AG04449 (cell line): ENCODE measurements at regions of chr5 and their contacts with region 1.

Region 1: GRCh38 chr5:172733131-172733973 is 37.6 kb downstream of the DUSP1 start:
- DNase-seq: peak; percentile 98
- H3K4me3 ChIP-seq: peak overlapping the region; percentile 36
- CTCF ChIP-seq: no peak

Region 2: DNA sequence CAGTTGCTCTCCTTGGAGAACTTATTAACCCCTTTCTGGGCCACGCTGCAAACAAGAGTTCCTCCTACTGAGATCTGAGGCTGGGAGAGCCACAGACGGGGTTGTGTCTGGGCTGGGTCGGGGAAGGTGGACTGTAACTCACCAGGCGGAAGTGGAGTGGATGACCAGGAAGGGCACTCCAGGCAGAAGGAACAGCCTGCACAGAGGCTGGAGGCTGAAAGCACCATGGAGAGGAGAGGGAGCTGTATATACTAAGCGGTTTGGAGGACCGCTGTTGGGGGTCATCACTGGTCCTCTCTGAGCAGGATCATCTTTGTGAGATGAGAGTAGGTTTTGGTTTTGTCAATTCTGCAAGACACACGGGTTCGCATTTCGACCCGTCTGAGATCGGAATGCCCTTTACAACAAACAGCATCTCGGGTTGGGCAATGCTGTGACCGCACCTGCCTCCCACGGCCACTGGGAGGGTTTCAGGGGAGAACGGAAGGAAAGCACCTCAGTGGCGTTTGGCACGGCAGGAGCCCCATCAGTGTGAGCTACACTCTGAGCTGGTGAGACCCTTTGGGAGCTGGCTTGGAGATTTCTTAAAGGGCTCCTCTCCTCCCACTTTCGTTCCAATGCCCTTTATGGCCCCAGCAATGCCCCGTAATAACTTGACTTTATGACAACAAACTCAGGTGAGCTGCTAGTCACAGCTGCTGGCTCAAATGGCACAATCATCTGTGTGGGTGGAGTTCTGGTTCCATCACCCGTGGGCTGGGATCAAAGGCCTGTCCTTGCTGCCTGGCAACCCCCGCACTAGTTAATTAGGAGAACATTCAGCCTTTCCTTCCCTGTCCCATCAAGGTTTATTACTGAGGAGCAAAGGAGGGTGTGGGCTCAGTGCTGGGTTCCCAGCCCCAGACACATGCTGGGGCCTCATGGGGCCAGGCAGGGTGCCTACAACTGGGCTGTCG is 111.0 kb before region 1 on chr5:
- CTCF ChIA-PET with region 1: no interaction called
- POLR2A ChIA-PET with region 1: no interaction called
- DNase-seq: no peak
- H3K4me3 ChIP-seq: no peak overlapping the region
- CTCF ChIP-seq: no peak

Region 3: GRCh38 chr5:172721301-172722130 is 11.8 kb before region 1 on chr5:
- CTCF ChIA-PET with region 1: interaction called, 39 read pairs
- POLR2A ChIA-PET with region 1: interaction called, 3 read pairs
- DNase-seq: no peak
- H3K4me3 ChIP-seq: no peak overlapping the region
- CTCF ChIP-seq: no peak

Region 4: GRCh38 chr5:172764849-172765765 is 31.8 kb after region 1 on chr5:
- CTCF ChIA-PET with region 1: interaction called, 5 read pairs
- POLR2A ChIA-PET with region 1: interaction called, 58 read pairs
- DNase-seq: peak; percentile 98
- H3K4me3 ChIP-seq: peak overlapping the region; percentile 54
- CTCF ChIP-seq: no peak

Region 5: DNA sequence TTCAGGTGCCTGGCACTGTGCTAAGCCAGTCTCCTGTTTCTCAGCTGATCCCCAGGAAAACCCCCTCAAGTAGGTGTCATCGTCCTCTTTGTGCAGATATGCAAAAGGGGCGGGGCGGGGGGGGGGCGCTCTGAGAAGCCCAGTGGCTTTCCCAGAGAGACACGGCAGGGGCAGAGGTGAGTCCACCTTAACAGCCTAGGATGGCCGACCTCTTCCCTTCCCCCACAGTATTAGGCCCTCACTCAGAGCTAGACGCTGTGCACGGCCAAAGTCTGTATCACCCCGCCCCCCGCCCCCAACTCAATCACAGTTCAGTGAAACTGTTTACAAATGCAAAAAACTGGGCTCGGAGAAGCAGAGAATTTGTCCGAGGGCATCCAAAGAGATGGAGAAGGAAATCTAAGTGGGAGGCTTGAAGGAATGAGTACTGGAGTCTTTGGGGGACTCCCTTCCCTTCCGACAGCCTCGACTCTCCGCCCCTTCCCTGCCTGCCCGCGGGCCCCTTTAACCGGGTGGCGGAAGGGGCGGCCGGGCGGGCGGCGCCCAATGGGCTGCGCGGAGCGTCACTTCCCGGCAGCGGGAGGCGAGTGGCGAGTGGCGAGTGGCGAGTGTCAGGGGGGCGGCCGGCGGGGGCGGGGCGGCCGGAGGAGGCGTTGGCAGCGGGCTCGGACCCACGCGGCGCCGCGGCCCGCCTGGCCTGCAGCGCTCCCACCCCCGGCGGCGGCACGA is 100.5 kb after region 1 on chr5 and contains the start of gene ERGIC1:
- CTCF ChIA-PET with region 1: no interaction called
- POLR2A ChIA-PET with region 1: no interaction called
- DNase-seq: no peak
- H3K4me3 ChIP-seq: peak within 1 kb of the TSS; percentile 91
- CTCF ChIP-seq: no peak

Region 6: GRCh38 chr5:172939071-172939470 is 205.7 kb after region 1 on chr5:
- CTCF ChIA-PET with region 1: interaction called, 11 read pairs
- POLR2A ChIA-PET with region 1: interaction called, 3 read pairs
- DNase-seq: no peak
- H3K4me3 ChIP-seq: no peak overlapping the region
- CTCF ChIP-seq: peak; percentile 58